WTC11 (cell line): ENCODE measurements at regions of chr18 and their contacts with region 1.

Region 1: GRCh38 chr18:27363872-27364271 is 178.8 kb upstream of the CHST9 start:
- DNase-seq: no peak
- ATAC-seq: peak; percentile 57
- H3K4me3 Mint-ChIP-seq: no peak overlapping the region
- H3K27ac Mint-ChIP-seq: no peak overlapping the region
- H3K4me1 Mint-ChIP-seq: no peaks in the 10 kb centered on the region
- H3K27me3 Mint-ChIP-seq: no peaks in the 10 kb centered on the region; the same call in 1 of the 2 replicates
- CTCF ChIP-seq: no peak

Region 2: GRCh38 chr18:27473318-27473717 is 109.4 kb after region 1 on chr18:
- CTCF ChIA-PET with region 1: no interaction called
- POLR2A ChIA-PET with region 1: no interaction called
- DNase-seq: no peak
- ATAC-seq: no peak
- H3K4me3 Mint-ChIP-seq: no peak overlapping the region
- H3K27ac Mint-ChIP-seq: no peak overlapping the region
- H3K4me1 Mint-ChIP-seq: peaks cover 7% of the 10 kb centered on the region; the same call in 1 of the 2 replicates
- H3K27me3 Mint-ChIP-seq: no peaks in the 10 kb centered on the region
- CTCF ChIP-seq: no peak

Region 3: GRCh38 chr18:27599202-27599829 is 235.4 kb after region 1 on chr18:
- CTCF ChIA-PET with region 1: interaction called, 10 read pairs
- POLR2A ChIA-PET with region 1: no interaction called
- DNase-seq: peak; percentile 68
- ATAC-seq: peak; percentile 59
- H3K4me3 Mint-ChIP-seq: no peak overlapping the region
- H3K27ac Mint-ChIP-seq: no peak overlapping the region
- H3K4me1 Mint-ChIP-seq: peaks cover 33% of the 10 kb centered on the region
- H3K27me3 Mint-ChIP-seq: no peaks in the 10 kb centered on the region
- CTCF ChIP-seq: peak; percentile 81